A549 (cell line): ENCODE measurements at regions of chr11 and their contacts with region 1.

Region 1: DNA sequence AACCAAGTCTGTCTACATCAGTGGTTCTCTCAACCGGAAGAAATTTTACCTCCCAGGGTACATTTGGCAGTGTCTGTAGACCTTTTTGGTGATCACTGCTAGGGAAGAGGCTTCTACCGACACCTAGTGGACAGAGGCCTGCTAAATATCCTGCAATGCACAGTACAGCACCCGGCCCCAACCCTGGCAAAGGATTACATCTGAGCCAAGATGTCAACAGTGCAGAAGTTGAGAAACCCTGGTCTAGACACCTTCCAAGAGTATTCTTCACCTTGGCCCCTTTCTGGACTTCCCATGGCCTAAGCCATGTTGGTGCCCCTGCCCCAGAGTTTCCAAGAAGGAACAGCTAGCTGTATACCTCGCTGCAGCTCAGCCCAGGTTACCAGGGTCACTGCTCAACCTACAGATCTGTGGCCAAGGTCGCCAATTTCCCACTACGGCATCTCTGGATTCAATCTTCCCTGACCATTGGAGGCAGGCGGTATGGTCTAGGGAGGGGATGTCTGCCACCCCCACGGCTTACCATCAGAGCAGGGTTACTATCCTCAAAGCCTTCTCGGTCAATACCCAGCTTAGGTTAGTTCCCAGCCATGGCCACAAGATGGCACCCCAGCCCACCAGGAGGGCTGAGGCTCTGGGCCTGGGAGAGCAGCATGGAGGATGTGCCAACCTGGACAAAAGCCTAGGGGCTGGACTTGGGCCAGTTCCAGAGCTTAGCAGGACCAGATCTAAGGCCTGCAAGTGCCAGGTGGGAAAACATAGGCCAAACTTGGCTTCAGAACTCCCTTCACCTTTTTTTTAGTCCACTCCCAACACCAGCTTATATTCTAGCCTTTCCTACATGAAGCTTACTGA is 3.7 kb upstream of the KCNC1 start:
- DNase-seq: peak; percentile 79 to 91
- ATAC-seq: peak; percentile 82 to 93
- H3K4me3 ChIP-seq: no peak overlapping the region
- H3K27ac ChIP-seq: no peak overlapping the region
- H3K4me1 ChIP-seq: no peaks in the 10 kb centered on the region; the same call in 2 of the 3 replicates
- CTCF ChIP-seq: peak; percentile 77
- EP300 ChIP-seq: no peak
- POLR2A ChIP-seq: no peak
- RAD21 ChIP-seq: peak; percentile 84 to 93

Region 2: DNA sequence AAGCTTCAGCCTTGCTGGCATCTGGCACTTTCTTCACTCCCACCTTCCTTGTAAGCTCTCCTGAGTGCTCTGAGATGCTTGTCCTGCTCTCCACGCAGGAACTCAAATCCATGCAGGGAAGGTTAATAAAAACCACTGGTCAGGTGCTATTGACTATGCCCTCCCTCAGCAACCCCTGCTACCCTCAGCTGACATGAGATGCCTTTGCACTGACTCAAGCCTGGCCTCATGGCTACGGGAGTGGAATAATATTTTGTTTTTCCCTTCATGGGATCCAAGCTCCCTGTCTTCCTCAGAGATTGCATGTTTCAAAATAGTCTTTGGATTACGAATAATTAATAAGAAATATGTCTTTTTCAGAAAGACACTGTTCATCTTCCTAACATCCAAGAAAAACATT is 222.5 kb before region 1 on chr11:
- CTCF ChIA-PET with region 1: no interaction called
- POLR2A ChIA-PET with region 1: no interaction called
- DNase-seq: no peak
- ATAC-seq: no peak
- H3K4me3 ChIP-seq: no peak overlapping the region
- H3K27ac ChIP-seq: no peak overlapping the region
- H3K4me1 ChIP-seq: peaks cover 7% of the 10 kb centered on the region; the same call in 2 of the 3 replicates
- CTCF ChIP-seq: no peak
- EP300 ChIP-seq: no peak
- POLR2A ChIP-seq: no peak
- RAD21 ChIP-seq: no peak

Region 3: DNA sequence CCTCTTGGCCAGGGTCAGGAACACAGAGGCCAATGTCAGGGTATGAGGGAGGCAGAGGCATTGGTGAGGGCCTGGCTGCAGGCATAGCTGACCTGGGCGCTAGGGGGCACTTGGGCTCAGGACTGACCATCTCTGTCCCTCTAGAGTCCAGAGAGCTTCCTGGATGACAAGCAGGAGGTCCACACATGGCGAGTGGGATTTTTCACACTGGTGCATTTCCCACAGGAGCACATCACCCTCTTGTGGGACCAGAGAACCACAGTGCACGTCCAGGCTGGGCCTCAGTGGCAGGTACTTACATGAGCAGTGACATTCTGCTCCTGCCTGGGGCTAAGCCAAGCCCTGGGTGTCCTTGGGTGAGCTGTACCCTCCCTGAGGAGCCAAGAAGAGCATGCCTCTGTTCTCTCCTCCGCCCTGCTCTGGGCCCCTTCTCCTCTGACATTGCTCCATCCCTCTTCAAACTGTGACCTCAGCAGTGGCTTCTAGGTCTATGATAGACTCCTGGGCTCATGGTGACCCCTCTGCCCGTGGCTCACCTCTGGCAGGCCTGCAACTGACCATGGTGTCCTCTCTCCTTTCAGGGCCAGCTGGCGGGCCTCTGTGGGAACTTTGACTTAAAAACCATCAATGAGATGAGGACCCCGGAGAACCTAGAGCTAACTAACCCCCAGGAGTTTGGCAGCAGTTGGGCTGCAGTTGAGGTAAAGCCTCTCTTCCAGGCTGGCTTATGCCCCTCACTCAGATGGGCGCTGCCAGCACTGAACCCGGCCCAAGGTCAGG is 137.2 kb before region 1 on chr11:
- CTCF ChIA-PET with region 1: interaction called, 64 read pairs
- POLR2A ChIA-PET with region 1: no interaction called
- DNase-seq: no peak
- ATAC-seq: peak in 1 of 2 experiments; percentile 62; a peak in 3 of 6 replicates
- H3K4me3 ChIP-seq: no peak overlapping the region
- H3K27ac ChIP-seq: no peak overlapping the region
- H3K4me1 ChIP-seq: no peaks in the 10 kb centered on the region
- CTCF ChIP-seq: no peak
- EP300 ChIP-seq: no peak
- POLR2A ChIP-seq: no peak
- RAD21 ChIP-seq: no peak

Region 4: GRCh38 chr11:17743808-17744119 is 12.9 kb after region 1 on chr11:
- CTCF ChIA-PET with region 1: interaction called, 94 read pairs
- POLR2A ChIA-PET with region 1: no interaction called
- DNase-seq: no peak
- ATAC-seq: peak in 1 of 2 experiments; percentile 8; a peak in 2 of 6 replicates
- H3K4me3 ChIP-seq: no peak overlapping the region
- H3K27ac ChIP-seq: no peak overlapping the region
- H3K4me1 ChIP-seq: no peaks in the 10 kb centered on the region
- CTCF ChIP-seq: no peak
- EP300 ChIP-seq: no peak
- POLR2A ChIP-seq: no peak
- RAD21 ChIP-seq: no peak

Region 5: GRCh38 chr11:17760102-17761029 is 29.5 kb after region 1 on chr11:
- CTCF ChIA-PET with region 1: interaction called, 17 read pairs
- POLR2A ChIA-PET with region 1: no interaction called
- DNase-seq: peak; percentile 57
- ATAC-seq: peak; percentile 75 to 96; a peak in 5 of 6 replicates
- H3K4me3 ChIP-seq: no peak overlapping the region
- H3K27ac ChIP-seq: no peak overlapping the region
- H3K4me1 ChIP-seq: no peaks in the 10 kb centered on the region
- CTCF ChIP-seq: peak; percentile 39
- EP300 ChIP-seq: no peak
- POLR2A ChIP-seq: no peak
- RAD21 ChIP-seq: peak; percentile 58 to 74

Region 6: DNA sequence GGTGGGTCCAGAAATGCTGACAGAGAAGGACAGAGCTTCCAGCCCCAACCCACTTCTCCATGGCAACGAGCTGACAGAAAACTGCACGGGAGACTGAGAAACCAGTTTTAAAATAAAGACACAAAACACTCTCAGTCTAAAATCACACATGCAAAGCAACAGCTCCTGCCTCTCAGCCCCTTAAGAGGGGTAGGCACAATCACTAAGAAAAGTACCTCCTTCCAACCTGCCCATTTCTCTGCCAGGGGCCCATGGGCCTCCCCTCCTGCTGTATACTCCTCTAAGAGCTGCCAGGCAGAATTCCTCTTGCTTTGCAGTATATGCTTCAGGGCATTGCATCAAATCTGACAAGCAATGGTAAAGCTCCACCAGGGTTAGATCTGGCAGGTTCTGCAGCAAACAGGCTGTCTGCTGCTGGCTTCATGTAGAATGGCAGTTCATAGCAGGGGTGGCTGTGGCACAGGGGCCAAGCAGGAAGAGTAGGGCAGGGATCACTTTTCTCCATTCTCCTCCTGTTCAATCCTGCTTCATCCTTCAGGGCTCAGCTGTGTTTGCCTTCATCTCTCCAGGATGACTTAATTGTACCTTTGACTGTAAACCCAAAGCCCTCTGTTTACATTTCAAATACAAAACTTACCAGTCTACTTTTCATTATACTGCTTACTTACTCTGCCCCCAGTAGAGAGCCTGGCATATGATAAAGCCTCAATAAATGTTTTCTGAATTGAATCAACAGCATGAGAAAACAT is 81.4 kb after region 1 on chr11:
- CTCF ChIA-PET with region 1: interaction called, 11 read pairs
- POLR2A ChIA-PET with region 1: no interaction called
- DNase-seq: no peak
- ATAC-seq: no peak
- H3K4me3 ChIP-seq: no peak overlapping the region
- H3K27ac ChIP-seq: no peak overlapping the region
- H3K4me1 ChIP-seq: no peaks in the 10 kb centered on the region
- CTCF ChIP-seq: no peak
- EP300 ChIP-seq: no peak
- POLR2A ChIP-seq: no peak
- RAD21 ChIP-seq: no peak